Endothelial cell of umbilical vein (primary cell): ENCODE measurements at regions of chr13 and their contacts with region 1.

Region 1: GRCh38 chr13:100588331-100589177 is at the start of gene GGACT:
- DNase-seq: peak; percentile 56
- H3K4me3 ChIP-seq: peak within 1 kb of the TSS; percentile 27 to 67 (median 57)
- H3K27ac ChIP-seq: peak within 1 kb of the TSS; percentile 33
- H3K4me1 ChIP-seq: peaks cover 15% of the 10 kb centered on the region
- H3K27me3 ChIP-seq: no peaks in the 10 kb centered on the region
- CTCF ChIP-seq: peak; percentile 72 to 92
- POLR2A ChIP-seq: no peak
- total RNA-seq, gene GGACT: 5.4 and 6.5 TPM in 2 replicates

Region 2: DNA sequence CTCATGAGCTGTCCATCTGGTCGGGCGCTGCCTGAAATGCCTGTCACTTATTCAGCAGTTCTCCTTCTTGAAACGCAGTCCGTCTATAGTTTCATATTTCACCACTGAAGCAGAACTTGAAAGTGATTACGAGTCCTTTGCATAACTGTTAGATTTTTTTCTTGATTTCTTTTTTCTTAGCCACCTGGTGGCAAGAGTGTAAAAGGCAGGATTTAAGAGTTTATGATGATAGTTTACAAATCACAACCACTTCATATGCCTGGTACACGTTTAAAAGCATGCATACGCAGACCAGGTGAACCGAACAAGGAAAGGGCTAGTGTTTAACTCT is 45.8 kb before region 1 on chr13:
- CTCF ChIA-PET with region 1: no interaction called
- POLR2A ChIA-PET with region 1: no interaction called
- dilution Hi-C with region 1: no loop called
- intact Hi-C with region 1: loop called (anchors 1 kb)
- DNase-seq: peak; percentile 52
- H3K4me3 ChIP-seq: no peak overlapping the region
- H3K27ac ChIP-seq: no peak overlapping the region
- H3K4me1 ChIP-seq: peaks cover 13% of the 10 kb centered on the region
- H3K27me3 ChIP-seq: no peaks in the 10 kb centered on the region
- CTCF ChIP-seq: peak; percentile 28 to 35
- POLR2A ChIP-seq: no peak

Region 3: GRCh38 chr13:100560498-100561157 is 27.9 kb before region 1 on chr13:
- CTCF ChIA-PET with region 1: no interaction called
- POLR2A ChIA-PET with region 1: no interaction called
- dilution Hi-C with region 1: no loop called
- intact Hi-C with region 1: no loop called
- DNase-seq: no peak
- H3K4me3 ChIP-seq: no peak overlapping the region
- H3K27ac ChIP-seq: no peak overlapping the region
- H3K4me1 ChIP-seq: no peaks in the 10 kb centered on the region
- H3K27me3 ChIP-seq: no peaks in the 10 kb centered on the region
- CTCF ChIP-seq: no peak
- POLR2A ChIP-seq: no peak

Region 4: DNA sequence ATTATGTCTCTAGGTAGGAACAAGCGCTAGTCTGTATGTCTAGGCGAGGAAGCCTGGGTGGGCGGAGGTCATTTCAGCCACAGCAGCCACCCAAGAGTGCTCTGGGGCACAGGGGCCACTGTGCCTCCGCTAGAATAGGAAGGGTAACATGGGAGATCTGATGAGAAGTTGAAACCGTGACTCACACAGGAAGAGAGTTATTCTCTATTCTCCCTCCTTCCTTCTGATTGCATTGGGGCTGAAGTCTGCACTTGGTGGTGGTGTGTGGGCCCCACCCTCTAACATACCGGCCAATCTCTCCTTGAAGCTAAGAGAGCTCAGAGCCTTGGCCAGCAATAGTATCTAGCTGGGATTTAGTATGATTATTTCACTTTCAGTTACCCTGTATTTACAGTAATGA is 20.4 kb after region 1 on chr13:
- CTCF ChIA-PET with region 1: interaction called, 4 read pairs
- POLR2A ChIA-PET with region 1: no interaction called
- dilution Hi-C with region 1: no loop called
- intact Hi-C with region 1: loop called (anchors 1 kb)
- DNase-seq: peak; percentile 61
- H3K4me3 ChIP-seq: no peak overlapping the region
- H3K27ac ChIP-seq: peak overlapping the region; percentile 15
- H3K4me1 ChIP-seq: peaks cover 12% of the 10 kb centered on the region
- H3K27me3 ChIP-seq: no peaks in the 10 kb centered on the region
- CTCF ChIP-seq: no peak
- POLR2A ChIP-seq: no peak

Region 5: DNA sequence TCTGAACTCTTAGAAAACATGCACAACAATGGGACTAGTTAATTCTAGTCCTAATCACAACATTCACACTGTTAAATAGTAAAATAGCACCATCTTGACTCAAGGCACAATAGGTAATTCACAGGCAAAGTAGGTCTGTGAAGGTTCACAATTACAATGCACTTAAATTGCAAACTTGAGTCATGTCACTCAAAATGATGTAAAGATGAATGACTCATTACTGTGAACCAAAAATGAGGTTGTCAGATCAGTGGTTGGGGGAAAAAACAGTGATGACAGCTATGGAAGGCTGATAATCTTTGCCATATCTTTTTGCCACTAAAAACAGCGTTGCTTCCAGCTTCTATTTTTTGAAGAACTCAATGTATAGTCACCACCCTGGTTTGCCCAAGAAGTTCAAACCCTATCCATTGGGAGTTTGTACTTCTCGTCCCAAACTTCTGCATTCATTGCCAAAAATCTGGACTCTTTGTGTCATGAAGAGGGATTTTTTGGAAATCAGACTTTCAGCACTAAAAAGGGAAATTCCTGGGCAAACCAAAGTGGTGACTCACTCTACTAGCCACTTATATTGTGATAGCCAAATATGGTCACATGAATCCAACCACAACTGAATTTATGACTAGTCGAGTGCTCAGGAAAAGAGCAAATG is 287.0 kb after region 1 on chr13:
- CTCF ChIA-PET with region 1: no interaction called
- POLR2A ChIA-PET with region 1: no interaction called
- dilution Hi-C with region 1: no loop called
- intact Hi-C with region 1: loop called (anchors 5 kb)
- DNase-seq: peak; percentile 87
- H3K4me3 ChIP-seq: no peak overlapping the region
- H3K27ac ChIP-seq: peak overlapping the region; percentile 89
- H3K4me1 ChIP-seq: peaks cover 13% of the 10 kb centered on the region
- H3K27me3 ChIP-seq: no peaks in the 10 kb centered on the region
- CTCF ChIP-seq: no peak
- POLR2A ChIP-seq: no peak